H1 (cell line): ENCODE measurements at regions of chr2 and their contacts with region 1.

Region 1: DNA sequence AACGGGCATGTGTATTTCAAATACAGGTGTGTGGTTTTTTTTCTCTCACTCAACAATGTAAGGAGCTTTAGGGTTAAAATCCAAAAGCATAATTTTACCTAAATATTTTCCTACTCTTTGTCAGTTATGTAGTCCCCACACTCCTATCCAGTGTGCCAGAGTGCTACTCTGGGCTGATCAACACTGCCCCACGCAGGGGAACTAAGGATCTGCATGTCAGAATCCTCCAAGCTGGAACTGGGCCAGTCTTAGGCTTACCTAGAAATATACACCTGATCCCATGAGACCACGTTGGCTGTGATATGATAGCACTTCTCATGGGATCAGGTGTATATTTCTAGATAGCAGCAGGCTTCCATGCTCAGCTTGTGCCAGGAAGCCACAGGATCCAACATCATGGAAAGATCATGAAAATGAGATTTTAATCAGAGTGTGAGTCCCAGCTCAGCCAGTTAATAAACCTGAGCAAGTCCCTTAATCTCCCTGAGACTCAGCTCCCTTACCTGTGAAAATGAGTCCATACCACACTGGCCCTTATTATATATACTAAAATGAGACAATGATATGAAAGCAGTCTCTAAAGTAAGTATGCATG is 29.7 kb downstream of the CCDC141 start:
- DNase-seq: peak; percentile 23 to 83
- H3K4me3 ChIP-seq: no peak overlapping the region
- H3K27ac ChIP-seq: no peak overlapping the region
- H3K4me1 ChIP-seq: no peaks in the 10 kb centered on the region
- H3K27me3 ChIP-seq: no peaks in the 10 kb centered on the region
- CTCF ChIP-seq: peak; percentile 71 to 82 (median 80)
- EP300 ChIP-seq: no peak
- POLR2A ChIP-seq: no peak
- RAD21 ChIP-seq: peak; percentile 81 to 85

Region 2: GRCh38 chr2:178796079-178796677 is 224.1 kb before region 1 on chr2:
- CTCF ChIA-PET with region 1: interaction called, 18 read pairs
- POLR2A ChIA-PET with region 1: no interaction called
- DNase-seq: no peak
- H3K4me3 ChIP-seq: no peak overlapping the region
- H3K27ac ChIP-seq: no peak overlapping the region
- H3K4me1 ChIP-seq: no peaks in the 10 kb centered on the region
- H3K27me3 ChIP-seq: no peaks in the 10 kb centered on the region
- CTCF ChIP-seq: peak in 2 of 3 experiments; percentile 29 to 50; a peak in 2 of 4 replicates
- EP300 ChIP-seq: no peak
- POLR2A ChIP-seq: no peak
- RAD21 ChIP-seq: peak in 1 of 2 experiments; percentile 67

Region 3: DNA sequence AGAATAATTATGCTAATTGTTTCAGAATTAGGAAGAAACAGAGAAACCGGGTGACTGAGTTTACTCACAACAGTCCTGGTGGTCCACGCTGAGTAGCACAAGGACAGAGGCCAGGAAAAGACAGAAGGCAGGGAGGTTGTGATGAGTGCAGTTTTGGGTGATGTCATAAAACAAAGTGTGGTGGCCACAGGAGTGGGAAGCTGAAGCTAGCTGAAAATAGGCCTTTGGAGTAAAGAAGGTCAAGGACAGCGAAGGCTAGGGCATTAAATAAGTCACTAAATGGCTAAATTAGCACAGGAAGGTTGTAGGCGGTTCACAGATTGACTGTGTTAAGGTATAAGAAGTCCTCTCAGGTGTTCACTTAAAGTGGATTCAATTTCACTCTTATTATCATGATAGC is 92.2 kb before region 1 on chr2:
- CTCF ChIA-PET with region 1: interaction called, 10 read pairs
- POLR2A ChIA-PET with region 1: no interaction called
- DNase-seq: no peak
- H3K4me3 ChIP-seq: no peak overlapping the region
- H3K27ac ChIP-seq: no peak overlapping the region
- H3K4me1 ChIP-seq: no peaks in the 10 kb centered on the region
- H3K27me3 ChIP-seq: no peaks in the 10 kb centered on the region
- CTCF ChIP-seq: no peak
- EP300 ChIP-seq: no peak
- POLR2A ChIP-seq: no peak
- RAD21 ChIP-seq: no peak

Region 4: GRCh38 chr2:179005976-179006375 is 14.3 kb before region 1 on chr2:
- CTCF ChIA-PET with region 1: interaction called, 66 read pairs
- POLR2A ChIA-PET with region 1: no interaction called
- DNase-seq: no peak
- H3K4me3 ChIP-seq: no peak overlapping the region
- H3K27ac ChIP-seq: no peak overlapping the region
- H3K4me1 ChIP-seq: no peaks in the 10 kb centered on the region
- H3K27me3 ChIP-seq: no peaks in the 10 kb centered on the region
- CTCF ChIP-seq: no peak
- EP300 ChIP-seq: no peak
- POLR2A ChIP-seq: no peak
- RAD21 ChIP-seq: no peak

Region 5: GRCh38 chr2:179044500-179044899 is 24.2 kb after region 1 on chr2:
- CTCF ChIA-PET with region 1: interaction called, 24 read pairs
- POLR2A ChIA-PET with region 1: no interaction called
- DNase-seq: no peak
- H3K4me3 ChIP-seq: no peak overlapping the region
- H3K27ac ChIP-seq: no peak overlapping the region
- H3K4me1 ChIP-seq: peaks cover 0 to 8% (median 5%) of the 10 kb centered on the region in 4 experiments; a peak in 4 of 7 replicates
- H3K27me3 ChIP-seq: no peaks in the 10 kb centered on the region
- CTCF ChIP-seq: no peak
- EP300 ChIP-seq: no peak
- POLR2A ChIP-seq: no peak
- RAD21 ChIP-seq: no peak